ENCODE measurements at regions of chr16 and their contacts with region 1.

Region 1: GRCh38 chr16:27374804-27375425 is 27.1 kb upstream of the IL21R start:
- DNase-seq: no peak
- ATAC-seq: peak; percentile 35
- H3K4me3 Mint-ChIP-seq: no peak overlapping the region
- H3K27ac Mint-ChIP-seq: no peak overlapping the region
- H3K4me1 Mint-ChIP-seq: peaks cover 48% of the 10 kb centered on the region
- H3K27me3 Mint-ChIP-seq: no peaks in the 10 kb centered on the region
- CTCF ChIP-seq: no peak

Region 2: GRCh38 chr16:27127308-27127707 is 247.6 kb before region 1 on chr16:
- CTCF ChIA-PET with region 1: no interaction called
- POLR2A ChIA-PET with region 1: no interaction called
- intact Hi-C with region 1: no loop called
- DNase-seq: no peak
- ATAC-seq: no peak
- H3K4me3 Mint-ChIP-seq: no peak overlapping the region
- H3K27ac Mint-ChIP-seq: no peak overlapping the region
- H3K4me1 Mint-ChIP-seq: no peaks in the 10 kb centered on the region
- H3K27me3 Mint-ChIP-seq: peaks cover 9% of the 10 kb centered on the region
- CTCF ChIP-seq: no peak

Region 3: DNA sequence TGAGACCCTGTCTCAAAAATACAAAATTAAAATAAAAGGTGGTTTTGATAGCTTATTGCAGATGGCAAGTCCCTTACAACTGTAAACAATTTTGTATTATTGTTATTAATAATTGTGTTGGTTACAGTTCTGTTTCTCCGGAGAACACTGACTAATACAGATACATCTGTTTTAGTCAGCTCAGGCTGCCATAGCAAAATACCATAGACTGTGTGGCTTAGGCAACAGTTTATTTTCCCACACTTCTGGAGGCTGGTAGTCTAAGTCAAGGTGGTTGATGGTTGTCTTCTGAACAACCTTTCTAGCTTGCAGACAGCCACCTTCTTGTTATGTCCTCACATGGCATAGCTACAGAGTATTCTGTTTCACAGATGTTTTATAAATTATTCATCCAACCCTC is 12.8 kb after region 1 on chr16:
- CTCF ChIA-PET with region 1: interaction called, 6 read pairs
- POLR2A ChIA-PET with region 1: interaction called, 95 read pairs
- intact Hi-C with region 1: no loop called
- DNase-seq: no peak
- ATAC-seq: no peak
- H3K4me3 Mint-ChIP-seq: no peak overlapping the region
- H3K27ac Mint-ChIP-seq: peak overlapping the region; percentile 41
- H3K4me1 Mint-ChIP-seq: peaks cover 36% of the 10 kb centered on the region
- H3K27me3 Mint-ChIP-seq: no peaks in the 10 kb centered on the region
- CTCF ChIP-seq: no peak

Region 4: GRCh38 chr16:27401768-27402568 is 27.1 kb after region 1 on chr16 and contains the start of gene IL21R:
- CTCF ChIA-PET with region 1: interaction called, 53 read pairs
- POLR2A ChIA-PET with region 1: interaction called, 1,103 read pairs
- intact Hi-C with region 1: loop called (anchors 1 kb)
- DNase-seq: peak; percentile 76
- ATAC-seq: peak; percentile 53
- H3K4me3 Mint-ChIP-seq: peak within 1 kb of the TSS; percentile 99
- H3K27ac Mint-ChIP-seq: peak within 1 kb of the TSS; percentile 96
- H3K4me1 Mint-ChIP-seq: peaks cover 88% of the 10 kb centered on the region
- H3K27me3 Mint-ChIP-seq: no peaks in the 10 kb centered on the region
- CTCF ChIP-seq: no peak
- total RNA-seq, gene IL21R: 144 and 167 TPM in 2 replicates